ENCODE measurements at regions of chr18 and their contacts with region 1.

Region 1: DNA sequence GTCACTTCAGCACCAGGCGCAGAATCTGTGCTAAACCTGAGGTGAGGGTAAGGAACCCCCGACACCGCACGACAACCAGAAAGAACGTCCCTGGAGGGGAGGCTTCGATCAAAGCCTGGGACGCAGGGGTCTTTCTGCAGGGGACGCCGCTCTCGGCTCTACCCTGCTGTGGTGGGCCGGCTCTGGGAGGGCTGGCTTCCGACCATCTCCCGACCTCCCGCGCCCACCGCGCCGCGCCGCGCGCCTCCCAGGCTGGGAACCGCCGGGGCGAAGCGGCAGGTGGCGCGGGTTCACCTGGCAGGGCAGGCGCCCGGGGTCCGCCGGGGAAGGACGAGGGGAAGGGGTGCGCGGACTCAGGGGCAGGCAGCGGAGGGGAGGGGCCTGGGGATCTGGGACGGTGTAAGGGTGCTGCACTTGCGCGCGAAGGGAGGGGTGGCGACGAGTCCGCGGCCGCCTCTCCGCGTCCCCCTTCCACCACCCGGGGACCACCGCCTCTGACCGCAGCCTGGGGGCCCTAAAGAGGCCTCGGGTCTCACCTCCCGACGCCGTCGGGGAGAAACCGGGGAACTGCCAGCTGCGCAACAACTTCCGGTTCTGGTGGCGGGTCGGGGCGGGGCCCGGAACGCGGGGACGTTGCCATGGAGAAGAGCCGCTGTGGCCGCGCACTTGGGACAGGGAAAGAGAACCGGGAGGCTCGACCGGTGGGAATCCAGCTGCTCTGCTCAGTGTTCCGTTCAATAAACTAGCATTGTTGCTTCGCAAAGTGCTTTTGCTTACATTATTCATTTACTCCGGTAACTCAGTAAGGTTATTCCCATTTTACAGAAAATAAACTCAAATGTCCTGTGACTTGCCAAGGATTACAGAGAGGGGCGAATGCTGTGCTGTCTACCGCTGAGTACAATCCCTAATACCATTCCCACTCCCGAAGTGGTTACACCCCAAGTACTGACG is at the start of gene ZNF396:
- DNase-seq: peak; percentile 86
- CTCF ChIP-seq: no peak

Region 2: GRCh38 chr18:35095983-35096676 is 280.9 kb before region 1 on chr18:
- in situ Hi-C with region 1: no loop called
- DNase-seq: peak; percentile 20
- CTCF ChIP-seq: no peak

Region 3: GRCh38 chr18:35231052-35231451 is 146.0 kb before region 1 on chr18:
- in situ Hi-C with region 1: loop called (anchors 10 kb)
- DNase-seq: peak; percentile 59
- CTCF ChIP-seq: peak; percentile 86

Region 4: DNA sequence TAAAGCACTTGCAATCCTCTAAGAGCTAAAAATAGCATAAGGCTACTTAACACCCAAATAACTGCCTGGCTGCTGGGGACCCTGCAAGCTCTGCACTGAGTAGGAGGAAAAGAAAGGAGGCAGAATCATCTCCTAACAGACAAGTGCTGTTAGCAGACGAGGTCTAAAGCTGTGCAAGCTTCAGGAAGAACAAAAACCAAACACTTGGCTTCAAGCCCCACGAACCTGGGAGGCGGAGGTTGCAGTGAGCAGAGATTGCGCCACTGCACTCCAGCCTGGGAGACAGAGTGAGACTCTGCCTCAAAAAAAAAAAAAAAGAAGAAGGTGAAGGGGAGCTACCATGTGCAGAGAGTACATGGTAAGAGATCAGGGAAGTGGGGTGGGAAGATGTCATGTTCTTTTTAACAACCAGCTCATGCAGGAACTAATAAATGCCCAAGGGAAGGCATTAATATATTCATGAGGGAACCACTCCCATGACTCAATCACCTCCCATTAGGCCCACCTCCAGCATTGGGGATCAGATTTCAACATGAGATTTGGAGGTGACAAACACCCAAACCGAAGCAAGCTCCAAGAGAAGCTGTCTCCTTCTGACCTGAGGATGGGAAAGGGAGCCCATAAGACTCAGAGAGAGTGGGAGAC is 149.6 kb after region 1 on chr18:
- in situ Hi-C with region 1: no loop called
- DNase-seq: no peak
- CTCF ChIP-seq: no peak